Activated CD4-positive, alpha-beta T cell treated with anti-CD3 and anti-CD28 coated beads for 36 hours (primary cell): ENCODE measurements at regions of chr13 and their contacts with region 1.

Region 1: DNA sequence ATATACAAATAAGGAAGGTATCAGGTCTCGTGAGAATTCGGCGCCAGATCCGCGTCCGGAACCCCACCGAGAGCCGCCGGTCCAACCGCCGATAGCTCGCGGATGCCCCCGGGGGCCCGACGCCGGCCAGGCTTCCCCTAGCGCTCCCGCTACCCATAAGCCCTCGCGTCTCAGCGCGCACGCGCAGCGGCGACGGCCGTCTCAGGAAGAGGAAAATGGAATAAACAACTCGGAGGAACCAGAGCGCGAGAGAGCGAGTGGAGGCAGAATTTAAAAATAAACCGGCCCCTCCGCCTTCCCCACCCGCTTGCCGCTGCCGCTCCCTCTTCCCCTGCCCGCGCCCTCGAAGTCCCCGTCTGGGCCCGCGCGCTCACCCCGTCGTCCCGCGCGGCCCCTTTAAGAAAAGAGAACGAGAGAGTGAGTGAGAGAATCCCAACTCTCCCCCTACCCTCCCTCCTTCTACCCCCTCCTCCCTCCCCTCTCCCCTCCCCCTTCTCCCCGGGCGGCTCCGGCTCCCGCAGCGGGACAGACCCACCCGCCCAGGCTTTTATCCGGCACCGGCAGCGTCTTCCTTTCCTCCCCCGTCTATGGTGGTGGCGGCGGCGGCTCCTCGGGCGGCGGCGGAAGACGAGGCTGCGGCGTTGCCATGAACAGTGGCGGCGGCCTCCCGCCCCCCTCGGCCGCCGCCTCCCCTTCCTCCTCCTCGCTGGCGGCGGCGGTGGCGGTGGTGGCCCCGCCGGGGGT is at the start of gene PAN3:
- DNase-seq: peak; percentile 94
- ATAC-seq: peak; percentile 55
- H3K4me3 Mint-ChIP-seq: peak within 1 kb of the TSS; percentile 95
- H3K27ac Mint-ChIP-seq: peak within 1 kb of the TSS; percentile 94
- H3K4me1 Mint-ChIP-seq: peaks cover 43% of the 10 kb centered on the region
- H3K27me3 Mint-ChIP-seq: no peaks in the 10 kb centered on the region
- total RNA-seq, gene PAN3: 26.6 to 27.3 TPM

Region 2: DNA sequence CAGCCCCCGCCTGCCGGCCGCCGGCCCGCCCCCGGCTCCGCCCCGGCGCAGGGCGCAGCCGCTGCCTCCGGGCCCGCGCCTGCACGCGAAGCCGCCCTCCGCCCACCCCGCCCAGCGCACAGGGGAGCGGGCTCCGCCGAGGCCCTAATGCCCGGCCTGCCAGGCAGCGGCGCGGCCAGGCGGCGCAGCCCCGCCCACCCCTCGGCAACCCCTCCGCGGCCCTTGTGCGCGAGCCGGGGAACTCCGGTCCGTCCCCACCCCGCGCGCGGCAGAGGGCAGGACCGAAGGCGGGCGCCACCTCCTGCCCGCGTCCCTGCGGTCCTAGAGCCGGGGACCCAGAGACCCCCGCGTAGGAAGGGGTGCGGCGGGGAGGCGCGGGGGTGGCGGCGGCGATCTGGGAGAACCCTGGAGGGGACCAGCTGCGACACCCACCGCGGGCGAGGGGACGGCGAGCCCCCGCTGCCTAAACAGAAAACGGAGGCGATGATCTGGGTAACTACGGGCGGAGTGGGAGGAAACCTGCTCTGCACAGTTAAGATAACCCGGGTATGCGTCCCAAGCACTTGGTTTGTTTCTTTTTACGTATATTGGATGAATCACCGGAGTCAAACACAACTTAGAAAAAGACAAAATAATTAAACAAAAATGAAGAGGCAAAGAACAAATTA is 966.2 kb before region 1 on chr13:
- CTCF ChIA-PET with region 1: no interaction called
- POLR2A ChIA-PET with region 1: no interaction called
- intact Hi-C with region 1: loop called in 1 of 2 experiments (anchors 5 kb)
- DNase-seq: peak; percentile 93
- ATAC-seq: peak; percentile 84
- H3K4me3 Mint-ChIP-seq: peak overlapping the region; percentile 70
- H3K27ac Mint-ChIP-seq: peak overlapping the region; percentile 88
- H3K4me1 Mint-ChIP-seq: peaks cover 60% of the 10 kb centered on the region
- H3K27me3 Mint-ChIP-seq: no peaks in the 10 kb centered on the region

Region 3: GRCh38 chr13:27424246-27425157 is 713.7 kb before region 1 on chr13 and contains the start of gene GTF3A:
- CTCF ChIA-PET with region 1: no interaction called
- POLR2A ChIA-PET with region 1: no interaction called
- intact Hi-C with region 1: loop called (anchors 1 to 10 kb)
- DNase-seq: peak; percentile 92
- ATAC-seq: peak; percentile 66
- H3K4me3 Mint-ChIP-seq: peak within 1 kb of the TSS; percentile 80
- H3K27ac Mint-ChIP-seq: peak within 1 kb of the TSS; percentile 97
- H3K4me1 Mint-ChIP-seq: peaks cover 45% of the 10 kb centered on the region
- H3K27me3 Mint-ChIP-seq: no peaks in the 10 kb centered on the region
- total RNA-seq, gene GTF3A: 177 to 208 TPM

Region 4: GRCh38 chr13:27620377-27621115 is 517.6 kb before region 1 on chr13 and contains the start of gene LNX2:
- CTCF ChIA-PET with region 1: no interaction called
- POLR2A ChIA-PET with region 1: no interaction called
- intact Hi-C with region 1: loop called (anchors 1 to 2 kb)
- DNase-seq: peak; percentile 98
- ATAC-seq: peak; percentile 92
- H3K4me3 Mint-ChIP-seq: peak within 1 kb of the TSS; percentile 92
- H3K27ac Mint-ChIP-seq: peak within 1 kb of the TSS; percentile 91
- H3K4me1 Mint-ChIP-seq: peaks cover 51% of the 10 kb centered on the region
- H3K27me3 Mint-ChIP-seq: no peaks in the 10 kb centered on the region
- total RNA-seq, gene LNX2: 4.7 to 4.8 TPM

Region 5: DNA sequence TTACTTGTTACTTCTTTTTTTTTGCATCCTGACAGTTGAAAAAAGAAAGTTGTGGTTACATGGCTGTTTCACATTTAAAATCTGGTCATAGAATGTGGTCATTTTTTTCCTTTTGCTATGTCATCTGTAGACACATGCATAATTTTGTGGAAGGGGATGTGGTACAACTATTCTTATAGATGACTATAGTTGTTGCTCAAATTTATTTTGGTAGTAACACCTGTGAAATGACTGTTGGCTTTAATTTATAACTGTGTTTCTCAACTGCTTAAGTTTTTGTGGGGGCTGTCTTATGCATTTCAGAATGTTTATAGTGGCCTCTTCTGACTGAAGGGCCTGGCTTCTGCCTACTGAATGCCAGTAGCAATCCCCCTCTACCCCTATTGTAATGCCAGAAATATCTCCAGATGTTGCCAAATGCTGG is 130.6 kb after region 1 on chr13:
- CTCF ChIA-PET with region 1: no interaction called
- POLR2A ChIA-PET with region 1: no interaction called
- intact Hi-C with region 1: loop called (anchors 1 to 5 kb)
- DNase-seq: no peak
- ATAC-seq: peak; percentile 90
- H3K4me3 Mint-ChIP-seq: no peak overlapping the region
- H3K27ac Mint-ChIP-seq: no peak overlapping the region
- H3K4me1 Mint-ChIP-seq: peaks cover 15% of the 10 kb centered on the region
- H3K27me3 Mint-ChIP-seq: no peaks in the 10 kb centered on the region

Region 6: DNA sequence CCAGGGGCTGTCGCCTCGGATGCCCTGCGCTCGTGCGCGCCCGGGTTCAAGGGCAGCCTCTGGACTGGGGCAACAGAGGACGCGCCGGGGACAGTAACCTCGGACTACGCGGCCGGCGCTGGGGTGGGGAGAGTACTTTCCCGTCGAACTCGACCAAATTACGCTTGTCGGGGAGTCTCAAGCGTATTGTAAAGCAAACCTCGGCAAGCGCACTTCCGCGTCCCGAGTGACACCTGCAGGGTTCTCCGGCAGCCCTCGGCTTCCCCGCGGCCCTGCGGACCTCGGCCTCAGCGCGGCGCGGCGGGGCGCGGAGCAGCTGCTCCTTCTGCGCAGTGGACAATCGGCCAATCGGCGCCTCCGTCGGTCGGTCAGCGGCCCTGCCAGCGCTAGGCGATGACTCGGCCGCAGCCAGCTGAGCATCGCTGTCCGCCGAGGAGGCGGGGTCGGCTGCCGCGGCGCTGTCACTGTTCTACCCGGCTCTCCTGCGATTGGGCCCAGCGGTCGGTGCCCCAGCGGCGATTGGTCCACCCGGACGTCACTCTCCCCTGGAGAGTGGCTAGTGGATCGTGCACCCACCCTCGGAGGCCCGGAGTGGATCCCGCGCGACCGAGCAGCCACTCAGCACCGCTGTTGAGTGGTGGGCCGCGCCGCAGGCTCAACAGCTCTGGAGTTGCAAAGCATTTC is 580.5 kb after region 1 on chr13 and contains the start of gene SLC46A3:
- CTCF ChIA-PET with region 1: no interaction called
- POLR2A ChIA-PET with region 1: no interaction called
- intact Hi-C with region 1: loop called (anchors 2 kb)
- DNase-seq: peak; percentile 97
- ATAC-seq: peak; percentile 100
- H3K4me3 Mint-ChIP-seq: peak within 1 kb of the TSS; percentile 84
- H3K27ac Mint-ChIP-seq: peak within 1 kb of the TSS; percentile 94
- H3K4me1 Mint-ChIP-seq: peaks cover 23% of the 10 kb centered on the region
- H3K27me3 Mint-ChIP-seq: no peaks in the 10 kb centered on the region
- total RNA-seq, gene SLC46A3: 2.8 to 3.2 TPM